Caco-2 (cell line): ENCODE measurements at regions of chr9 and their contacts with region 1.

Region 1: GRCh38 chr9:112361601-112362000 is 18.3 kb upstream of the HSDL2 start:
- DNase-seq: peak in 1 of 2 experiments; percentile 49
- H3K4me3 ChIP-seq: no peak overlapping the region
- H3K4me3 Mint-ChIP-seq: no peak overlapping the region
- H3K27ac Mint-ChIP-seq: no peak overlapping the region
- H3K4me1 ChIP-seq: no peaks in the 10 kb centered on the region
- H3K4me1 Mint-ChIP-seq: no peaks in the 10 kb centered on the region
- H3K27me3 ChIP-seq: no peaks in the 10 kb centered on the region
- H3K27me3 Mint-ChIP-seq: no peaks in the 10 kb centered on the region
- CTCF ChIP-seq: peak; percentile 43 to 70

Region 2: GRCh38 chr9:112086627-112087026 is 275.0 kb before region 1 on chr9:
- CTCF ChIA-PET with region 1: no interaction called
- POLR2A ChIA-PET with region 1: no interaction called
- intact Hi-C with region 1: loop called (anchors 2 kb)
- DNase-seq: no peak
- H3K4me3 ChIP-seq: no peak overlapping the region
- H3K4me3 Mint-ChIP-seq: no peak overlapping the region
- H3K27ac Mint-ChIP-seq: no peak overlapping the region
- H3K4me1 ChIP-seq: 0 out of 2 replicates have a peak, but pooled peaks cover 4% of the 10 kb centered on the region
- H3K4me1 Mint-ChIP-seq: peaks cover 12% of the 10 kb centered on the region
- H3K27me3 ChIP-seq: no peaks in the 10 kb centered on the region
- H3K27me3 Mint-ChIP-seq: no peaks in the 10 kb centered on the region
- CTCF ChIP-seq: peak; percentile 38 to 46

Region 3: DNA sequence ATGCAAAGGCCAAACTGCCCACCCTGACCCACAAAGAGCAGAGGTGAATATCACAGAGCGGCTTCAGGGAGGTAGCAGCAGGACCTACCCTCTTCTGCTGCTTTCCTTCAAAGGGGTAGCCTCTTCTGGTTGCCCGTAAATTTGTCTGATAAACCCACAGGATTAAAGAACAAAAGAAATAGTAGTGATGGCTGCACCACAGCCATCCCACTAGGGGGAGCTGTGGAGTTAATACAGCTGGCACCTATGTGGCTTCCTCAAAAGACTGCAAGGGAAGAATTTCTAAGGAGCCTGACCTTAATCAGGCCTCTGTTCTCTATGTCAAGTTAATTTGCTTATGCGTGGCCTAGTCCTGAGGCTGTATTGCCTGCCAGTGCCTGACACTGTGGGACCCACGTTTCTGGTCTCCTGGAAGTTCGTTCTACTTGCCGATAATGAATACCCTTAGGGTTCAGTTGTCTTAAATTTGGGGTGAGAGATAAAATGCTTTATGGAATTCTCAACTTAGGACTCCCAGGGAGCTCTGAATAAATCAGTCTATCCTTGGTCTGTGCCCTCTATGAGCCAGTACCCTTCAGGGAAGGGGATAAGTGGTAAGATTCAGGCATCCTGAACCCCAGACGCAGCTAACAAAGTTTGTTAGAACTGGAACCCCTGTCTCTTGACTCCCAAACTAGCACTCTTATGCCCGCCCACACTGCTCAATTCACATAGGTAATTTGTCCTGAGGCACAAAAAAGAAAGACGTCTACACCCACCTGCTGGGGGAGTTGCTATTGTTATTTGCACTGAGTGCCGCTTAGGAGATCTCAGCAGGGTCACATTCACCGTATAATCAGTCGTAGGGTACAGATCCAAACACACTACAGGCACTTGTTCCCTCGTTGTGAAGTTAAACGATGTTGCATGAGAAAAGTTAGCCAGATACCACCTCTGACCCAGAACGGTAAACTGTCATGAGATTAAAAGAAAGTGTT is 263.6 kb before region 1 on chr9:
- CTCF ChIA-PET with region 1: interaction called, 4 read pairs
- POLR2A ChIA-PET with region 1: no interaction called
- intact Hi-C with region 1: loop called (anchors 1 kb)
- DNase-seq: peak; percentile 65 to 79
- H3K4me3 ChIP-seq: no peak overlapping the region
- H3K4me3 Mint-ChIP-seq: no peak overlapping the region
- H3K27ac Mint-ChIP-seq: no peak overlapping the region
- H3K4me1 ChIP-seq: 0 out of 2 replicates have a peak, but pooled peaks cover 7% of the 10 kb centered on the region
- H3K4me1 Mint-ChIP-seq: peaks cover 23% of the 10 kb centered on the region
- H3K27me3 ChIP-seq: no peaks in the 10 kb centered on the region
- H3K27me3 Mint-ChIP-seq: no peaks in the 10 kb centered on the region
- CTCF ChIP-seq: peak; percentile 80 to 81

Region 4: GRCh38 chr9:112112941-112113681 is 248.5 kb before region 1 on chr9:
- CTCF ChIA-PET with region 1: interaction called, 7 read pairs
- POLR2A ChIA-PET with region 1: no interaction called
- intact Hi-C with region 1: loop called (anchors 1 kb)
- DNase-seq: peak; percentile 78 to 80
- H3K4me3 ChIP-seq: no peak overlapping the region
- H3K4me3 Mint-ChIP-seq: no peak overlapping the region
- H3K27ac Mint-ChIP-seq: peak overlapping the region; percentile 53
- H3K4me1 ChIP-seq: peaks cover 39% of the 10 kb centered on the region
- H3K4me1 Mint-ChIP-seq: peaks cover 32% of the 10 kb centered on the region
- H3K27me3 ChIP-seq: no peaks in the 10 kb centered on the region
- H3K27me3 Mint-ChIP-seq: no peaks in the 10 kb centered on the region
- CTCF ChIP-seq: peak; percentile 80 to 81